CD8-positive, alpha-beta T cell (primary cell): ENCODE measurements at regions of chr10 and their contacts with region 1.

Region 1: GRCh38 chr10:4849555-4850242 is 23.7 kb downstream of the AKR1E2 start:
- DNase-seq: peak; percentile 59 to 87 (median 81)
- ATAC-seq: peak; percentile 92
- H3K4me3 ChIP-seq: no peak overlapping the region
- H3K4me3 Mint-ChIP-seq: no peak overlapping the region
- H3K27ac ChIP-seq: no peak overlapping the region
- H3K27ac Mint-ChIP-seq: no peak overlapping the region
- H3K4me1 ChIP-seq: no peaks in the 10 kb centered on the region
- H3K4me1 Mint-ChIP-seq: peaks cover 7% of the 10 kb centered on the region
- H3K27me3 ChIP-seq: no peaks in the 10 kb centered on the region
- H3K27me3 Mint-ChIP-seq: no peaks in the 10 kb centered on the region
- CTCF ChIP-seq: peak; percentile 98

Region 2: DNA sequence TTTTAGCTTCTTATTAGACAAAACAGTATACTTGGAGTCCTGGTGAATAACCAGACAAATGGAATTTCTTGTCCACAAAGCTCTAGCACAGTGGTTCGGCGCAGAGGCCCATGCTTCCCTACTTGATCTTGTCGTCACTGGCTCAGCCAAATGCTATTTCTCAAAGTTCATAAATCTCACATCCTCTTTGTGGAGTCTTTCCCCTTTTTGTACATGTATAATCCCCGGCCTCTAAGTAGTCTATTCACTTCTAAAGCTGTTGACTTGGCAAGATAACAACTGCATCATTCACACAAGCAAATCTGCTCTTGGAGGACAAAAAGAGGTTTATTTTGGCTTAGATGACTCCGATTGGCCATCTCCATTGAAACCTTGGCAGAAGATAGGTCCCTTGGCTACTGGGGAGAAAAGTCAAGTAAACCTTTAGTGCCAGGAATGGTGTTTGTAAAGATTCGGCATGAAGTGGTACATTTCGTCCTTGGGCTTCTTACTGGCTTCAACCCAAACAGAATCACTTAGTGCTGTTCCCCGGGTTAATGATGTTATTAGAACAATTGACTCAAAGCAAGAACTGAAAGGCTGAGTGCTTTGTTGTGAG is 28.8 kb before region 1 on chr10:
- CTCF ChIA-PET with region 1: interaction called, 16 read pairs
- POLR2A ChIA-PET with region 1: no interaction called
- intact Hi-C with region 1: no loop called
- DNase-seq: no peak
- ATAC-seq: no peak
- H3K4me3 ChIP-seq: no peak overlapping the region
- H3K4me3 Mint-ChIP-seq: no peak overlapping the region
- H3K27ac ChIP-seq: no peak overlapping the region
- H3K27ac Mint-ChIP-seq: no peak overlapping the region
- H3K4me1 ChIP-seq: no peaks in the 10 kb centered on the region
- H3K4me1 Mint-ChIP-seq: peaks cover 2% of the 10 kb centered on the region
- H3K27me3 ChIP-seq: peaks cover 0 to 7% of the 10 kb centered on the region in 2 experiments
- H3K27me3 Mint-ChIP-seq: peaks cover 42% of the 10 kb centered on the region
- CTCF ChIP-seq: no peak

Region 3: GRCh38 chr10:4839401-4839800 is 10.3 kb before region 1 on chr10:
- CTCF ChIA-PET with region 1: interaction called, 70 read pairs
- POLR2A ChIA-PET with region 1: no interaction called
- intact Hi-C with region 1: no loop called
- DNase-seq: no peak
- ATAC-seq: no peak
- H3K4me3 ChIP-seq: no peak overlapping the region
- H3K4me3 Mint-ChIP-seq: no peak overlapping the region
- H3K27ac ChIP-seq: no peak overlapping the region
- H3K27ac Mint-ChIP-seq: no peak overlapping the region
- H3K4me1 ChIP-seq: peaks cover 25% of the 10 kb centered on the region
- H3K4me1 Mint-ChIP-seq: peaks cover 23% of the 10 kb centered on the region
- H3K27me3 ChIP-seq: no peaks in the 10 kb centered on the region
- H3K27me3 Mint-ChIP-seq: no peaks in the 10 kb centered on the region
- CTCF ChIP-seq: no peak

Region 4: DNA sequence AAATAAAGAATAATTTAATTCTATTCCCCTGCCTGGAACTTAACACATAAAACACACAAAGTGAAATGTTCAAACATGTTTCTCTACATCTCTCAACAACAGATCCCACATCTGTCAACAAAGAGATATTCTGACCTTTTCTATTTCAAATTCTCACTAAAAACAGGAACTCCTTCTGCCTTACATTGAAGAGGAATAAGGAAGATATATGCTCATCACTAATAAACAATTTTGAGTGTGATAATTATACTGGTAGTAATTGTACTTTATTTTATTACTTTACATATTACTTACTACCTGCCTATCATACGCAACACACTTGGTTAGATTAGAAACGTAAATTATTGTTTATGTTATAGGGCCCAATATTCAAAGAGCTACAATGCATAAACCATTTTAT is 140.5 kb after region 1 on chr10:
- CTCF ChIA-PET with region 1: no interaction called
- POLR2A ChIA-PET with region 1: no interaction called
- intact Hi-C with region 1: no loop called
- DNase-seq: no peak
- ATAC-seq: no peak
- H3K4me3 ChIP-seq: no peak overlapping the region
- H3K4me3 Mint-ChIP-seq: no peak overlapping the region
- H3K27ac ChIP-seq: no peak overlapping the region
- H3K27ac Mint-ChIP-seq: no peak overlapping the region
- H3K4me1 ChIP-seq: no peaks in the 10 kb centered on the region
- H3K4me1 Mint-ChIP-seq: no peaks in the 10 kb centered on the region
- H3K27me3 ChIP-seq: no peaks in the 10 kb centered on the region
- H3K27me3 Mint-ChIP-seq: no peaks in the 10 kb centered on the region
- CTCF ChIP-seq: no peak

Region 5: DNA sequence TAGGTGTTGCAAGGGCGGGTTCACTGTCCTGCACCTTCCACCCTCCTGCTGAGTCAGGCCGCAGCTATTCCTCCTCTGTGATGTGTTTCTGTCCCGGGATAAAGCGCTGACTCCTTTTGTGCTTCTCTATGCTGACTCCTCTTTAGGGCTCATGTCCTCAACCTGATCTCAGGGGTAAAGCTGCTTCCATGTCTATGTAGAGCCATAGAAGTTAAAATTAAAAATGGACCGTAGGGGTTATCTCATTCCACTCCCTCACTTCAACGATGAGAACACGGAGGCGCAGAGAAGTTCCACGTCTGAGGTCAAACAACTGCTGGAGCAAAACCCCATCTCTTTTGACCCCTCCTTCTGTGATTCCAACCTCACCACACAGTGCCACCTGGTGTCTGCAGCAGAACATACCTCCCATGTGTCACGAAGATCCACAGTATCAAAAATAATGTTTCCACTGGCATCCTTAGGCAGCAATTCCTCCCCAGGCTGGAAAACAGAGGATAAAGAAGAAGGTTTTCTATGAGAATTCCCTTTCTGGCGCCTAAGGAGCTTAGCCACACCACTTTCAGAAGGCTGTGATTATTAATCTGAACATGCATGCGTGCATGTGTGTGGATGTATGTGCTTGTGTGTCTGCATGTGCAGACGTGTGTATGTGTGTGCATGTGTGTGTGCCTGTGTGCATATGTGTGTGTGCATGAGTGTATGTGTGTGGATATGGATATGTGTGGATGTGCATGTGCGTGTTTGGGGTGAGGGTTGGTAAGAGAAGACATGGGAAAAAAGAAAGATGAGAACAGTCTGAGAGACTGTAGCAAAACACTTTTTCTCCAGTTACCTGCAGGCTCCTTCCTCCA is 433.8 kb after region 1 on chr10:
- CTCF ChIA-PET with region 1: interaction called, 32 read pairs
- POLR2A ChIA-PET with region 1: no interaction called
- intact Hi-C with region 1: loop called (anchors 1 kb)
- DNase-seq: peak in 8 of 9 experiments; percentile 15 to 67 (median 54)
- ATAC-seq: peak; percentile 73
- H3K4me3 ChIP-seq: no peak overlapping the region
- H3K4me3 Mint-ChIP-seq: no peak overlapping the region
- H3K27ac ChIP-seq: no peak overlapping the region
- H3K27ac Mint-ChIP-seq: no peak overlapping the region
- H3K4me1 ChIP-seq: peaks cover 11% of the 10 kb centered on the region
- H3K4me1 Mint-ChIP-seq: peaks cover 17% of the 10 kb centered on the region
- H3K27me3 ChIP-seq: no peaks in the 10 kb centered on the region
- H3K27me3 Mint-ChIP-seq: no peaks in the 10 kb centered on the region
- CTCF ChIP-seq: peak; percentile 52

Region 6: DNA sequence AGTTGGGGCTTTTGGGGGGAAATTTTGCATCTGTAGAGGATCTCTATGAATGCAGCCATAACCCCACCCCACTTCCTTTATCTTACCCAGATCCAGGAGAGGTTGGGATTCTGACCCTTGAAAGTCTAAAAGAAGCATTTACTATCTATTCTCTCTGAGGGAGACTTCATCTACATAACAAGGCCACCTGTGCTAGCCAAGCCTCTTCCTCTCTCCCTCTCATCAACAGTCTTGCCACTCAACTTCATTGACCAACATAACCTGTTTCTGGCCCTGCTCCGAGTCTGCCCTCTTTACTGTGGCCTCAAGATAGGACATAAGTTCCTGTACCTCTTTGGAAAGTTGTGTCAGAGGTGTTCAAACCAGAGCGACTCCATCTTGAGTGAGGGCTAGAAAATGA is 535.5 kb after region 1 on chr10:
- CTCF ChIA-PET with region 1: interaction called, 24 read pairs
- POLR2A ChIA-PET with region 1: no interaction called
- intact Hi-C with region 1: loop called (anchors 1 kb)
- DNase-seq: no peak
- ATAC-seq: no peak
- H3K4me3 ChIP-seq: no peak overlapping the region
- H3K4me3 Mint-ChIP-seq: no peak overlapping the region
- H3K27ac ChIP-seq: no peak overlapping the region
- H3K27ac Mint-ChIP-seq: no peak overlapping the region
- H3K4me1 ChIP-seq: no peaks in the 10 kb centered on the region
- H3K4me1 Mint-ChIP-seq: peaks cover 2% of the 10 kb centered on the region
- H3K27me3 ChIP-seq: no peaks in the 10 kb centered on the region
- H3K27me3 Mint-ChIP-seq: no peaks in the 10 kb centered on the region
- CTCF ChIP-seq: no peak

Region 7: GRCh38 chr10:5446390-5446926 is 596.8 kb after region 1 on chr10:
- CTCF ChIA-PET with region 1: interaction called, 11 read pairs
- POLR2A ChIA-PET with region 1: no interaction called
- intact Hi-C with region 1: no loop called
- DNase-seq: peak; percentile 42 to 83 (median 73)
- ATAC-seq: peak; percentile 67
- H3K4me3 ChIP-seq: peak overlapping the region; percentile 32 to 54
- H3K4me3 Mint-ChIP-seq: peak overlapping the region; percentile 85
- H3K27ac ChIP-seq: peak overlapping the region in 1 of 2 experiments; percentile 45
- H3K27ac Mint-ChIP-seq: peak overlapping the region; percentile 87
- H3K4me1 ChIP-seq: peaks cover 25% of the 10 kb centered on the region
- H3K4me1 Mint-ChIP-seq: peaks cover 32% of the 10 kb centered on the region
- H3K27me3 ChIP-seq: no peaks in the 10 kb centered on the region
- H3K27me3 Mint-ChIP-seq: no peaks in the 10 kb centered on the region
- CTCF ChIP-seq: no peak